Caco-2 (cell line): ENCODE measurements at regions of chr22 and their contacts with region 1.

Region 1: GRCh38 chr22:21938071-21938822 is 14.4 kb downstream of the PPM1F start:
- DNase-seq: peak; percentile 86 to 93
- H3K4me3 ChIP-seq: peak overlapping the region; percentile 90
- H3K4me3 Mint-ChIP-seq: peak overlapping the region; percentile 97
- H3K27ac Mint-ChIP-seq: peak overlapping the region; percentile 88
- H3K4me1 ChIP-seq: 0 out of 2 replicates have a peak, but pooled peaks cover 3% of the 10 kb centered on the region
- H3K4me1 Mint-ChIP-seq: peaks cover 9% of the 10 kb centered on the region
- H3K27me3 ChIP-seq: no peaks in the 10 kb centered on the region
- H3K27me3 Mint-ChIP-seq: no peaks in the 10 kb centered on the region
- CTCF ChIP-seq: peak; percentile 88 to 98

Region 2: DNA sequence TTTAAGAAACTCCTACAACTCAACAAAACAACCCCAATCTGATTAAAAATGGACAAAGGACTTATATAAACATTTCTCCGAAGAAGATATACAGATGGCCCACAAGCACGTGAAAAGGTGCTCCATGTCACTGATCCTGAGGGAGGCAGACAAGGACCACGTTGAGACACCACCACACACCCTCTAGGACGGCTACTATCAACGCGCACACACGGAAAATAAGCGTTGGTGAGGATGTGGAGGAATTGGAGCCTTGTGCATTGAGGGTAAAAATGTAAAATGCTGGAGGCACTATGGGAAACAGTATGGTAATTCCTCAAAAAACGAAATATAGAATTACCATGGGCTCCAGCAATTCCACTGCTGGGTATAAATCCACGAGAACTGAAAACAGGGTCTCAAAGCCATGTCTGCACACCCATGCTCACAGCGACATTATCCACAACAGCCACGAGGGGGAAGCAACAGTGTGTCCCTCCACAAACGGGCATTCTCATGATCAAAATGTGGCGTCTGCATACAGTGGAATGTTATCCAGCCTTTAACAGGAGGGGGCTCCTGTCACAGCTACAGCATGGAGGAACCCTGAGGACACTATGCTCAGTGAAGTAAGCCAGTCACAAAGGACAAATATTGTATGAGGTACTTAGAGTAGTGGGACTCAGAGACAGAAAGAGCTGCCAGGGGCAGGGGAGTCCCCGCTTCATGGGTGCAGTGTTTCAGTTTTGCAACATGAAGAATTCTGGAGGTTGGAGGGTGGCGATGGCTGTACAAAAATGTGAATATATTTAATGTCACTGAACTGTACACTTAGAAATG is 225.1 kb before region 1 on chr22:
- CTCF ChIA-PET with region 1: interaction called, 6 read pairs
- POLR2A ChIA-PET with region 1: no interaction called
- intact Hi-C with region 1: loop called (anchors 1 kb)
- DNase-seq: peak; percentile 76 to 78
- H3K4me3 ChIP-seq: 0 out of 2 replicates have a peak overlapping the region, but pooled peaks have one; percentile 4
- H3K4me3 Mint-ChIP-seq: peak overlapping the region; percentile 49
- H3K27ac Mint-ChIP-seq: no peak overlapping the region
- H3K4me1 ChIP-seq: peaks cover 12% of the 10 kb centered on the region
- H3K4me1 Mint-ChIP-seq: peaks cover 18% of the 10 kb centered on the region
- H3K27me3 ChIP-seq: no peaks in the 10 kb centered on the region
- H3K27me3 Mint-ChIP-seq: no peaks in the 10 kb centered on the region
- CTCF ChIP-seq: peak; percentile 66 to 72

Region 3: DNA sequence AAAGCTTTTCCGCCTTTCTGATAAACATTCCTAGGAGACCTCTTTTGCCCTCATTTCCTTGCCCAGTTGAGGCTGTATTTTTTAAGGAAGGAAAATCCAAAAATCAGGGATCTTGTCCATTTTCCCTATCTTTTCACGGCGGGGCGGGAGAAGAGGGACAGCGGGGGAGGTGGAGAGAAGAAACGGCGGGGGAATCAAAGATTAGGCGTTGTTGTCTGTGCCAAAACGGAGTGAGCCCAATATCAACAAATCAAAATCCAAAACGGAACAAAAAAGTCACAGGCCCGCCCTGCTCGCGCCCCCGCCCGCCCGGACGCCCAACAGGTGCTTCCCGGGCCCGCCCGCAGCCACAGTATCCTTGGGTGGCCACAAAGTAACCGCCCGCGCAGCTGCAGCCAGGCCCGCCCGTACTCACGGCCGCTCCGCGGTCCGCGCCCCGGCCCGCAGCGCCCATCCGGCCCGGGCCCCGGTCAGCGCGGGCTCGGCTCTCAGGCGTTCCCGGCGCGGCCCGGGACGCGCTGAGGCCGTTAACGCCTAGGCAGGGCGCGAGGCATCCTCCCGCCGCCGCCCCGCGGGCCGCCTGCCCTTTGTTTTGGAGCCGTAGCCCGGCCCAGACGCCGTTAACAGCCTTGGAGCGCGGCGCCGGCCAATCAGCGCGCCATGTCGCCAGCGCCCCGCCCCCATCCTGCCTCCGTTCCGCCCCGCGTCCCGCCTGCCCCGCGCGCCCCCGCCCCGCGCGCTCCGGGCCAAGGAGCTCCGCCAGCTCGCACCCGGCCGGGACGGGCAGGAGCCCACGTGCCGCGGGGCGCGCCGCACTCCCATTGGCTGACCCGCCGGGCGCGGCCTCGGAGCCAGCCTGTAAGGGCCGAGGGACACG is 202.8 kb before region 1 on chr22 and contains the start of gene YPEL1:
- CTCF ChIA-PET with region 1: interaction called, 4 read pairs
- POLR2A ChIA-PET with region 1: interaction called, 4 read pairs
- intact Hi-C with region 1: loop called (anchors 2 kb)
- DNase-seq: peak; percentile 95 to 99
- H3K4me3 ChIP-seq: peak within 1 kb of the TSS; percentile 62
- H3K4me3 Mint-ChIP-seq: peak within 1 kb of the TSS; percentile 82
- H3K27ac Mint-ChIP-seq: no peak within 1 kb of the TSS
- H3K4me1 ChIP-seq: peaks cover 3% of the 10 kb centered on the region; the same call in 1 of the 2 replicates
- H3K4me1 Mint-ChIP-seq: peaks cover 8% of the 10 kb centered on the region
- H3K27me3 ChIP-seq: no peaks in the 10 kb centered on the region
- H3K27me3 Mint-ChIP-seq: peaks cover 2% of the 10 kb centered on the region
- CTCF ChIP-seq: no peak
- total RNA-seq, gene YPEL1: 1.2 and 1.3 TPM in 2 replicates

Region 4: DNA sequence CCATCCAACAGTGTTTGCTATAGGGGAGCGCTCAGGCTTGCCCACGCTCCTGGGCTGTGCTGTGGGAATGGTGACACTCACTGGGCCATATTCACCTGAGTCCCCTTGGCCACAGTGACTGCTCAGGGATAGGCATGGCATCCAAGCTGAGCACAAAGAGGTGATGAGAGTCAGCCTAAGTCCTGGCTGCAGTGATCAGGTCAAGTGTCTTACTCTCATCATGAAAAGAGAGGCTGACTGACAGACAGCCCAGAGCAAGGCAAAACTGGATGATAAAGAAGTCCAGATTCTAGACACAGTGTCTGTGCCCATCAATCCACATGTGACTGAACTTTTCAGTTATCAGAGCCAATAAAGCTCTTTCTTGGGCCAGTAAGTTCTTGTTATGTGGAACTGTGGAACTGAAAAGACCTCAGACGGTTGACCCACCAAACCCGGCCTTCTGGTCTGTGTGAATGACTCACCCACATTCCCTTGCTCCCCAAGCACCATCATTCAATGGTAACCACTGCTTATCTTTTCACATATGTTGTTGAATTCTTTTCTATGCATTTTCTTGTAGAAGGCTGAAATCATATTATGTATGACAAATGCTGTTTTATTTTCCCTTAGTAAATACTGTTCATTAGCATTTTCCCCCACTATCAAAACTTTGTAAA is 159.4 kb before region 1 on chr22:
- CTCF ChIA-PET with region 1: interaction called, 6 read pairs
- POLR2A ChIA-PET with region 1: no interaction called
- intact Hi-C with region 1: loop called (anchors 1 kb)
- DNase-seq: no peak
- H3K4me3 ChIP-seq: no peak overlapping the region
- H3K4me3 Mint-ChIP-seq: no peak overlapping the region
- H3K27ac Mint-ChIP-seq: no peak overlapping the region
- H3K4me1 ChIP-seq: no peaks in the 10 kb centered on the region
- H3K4me1 Mint-ChIP-seq: no peaks in the 10 kb centered on the region
- H3K27me3 ChIP-seq: no peaks in the 10 kb centered on the region
- H3K27me3 Mint-ChIP-seq: no peaks in the 10 kb centered on the region
- CTCF ChIP-seq: no peak

Region 5: DNA sequence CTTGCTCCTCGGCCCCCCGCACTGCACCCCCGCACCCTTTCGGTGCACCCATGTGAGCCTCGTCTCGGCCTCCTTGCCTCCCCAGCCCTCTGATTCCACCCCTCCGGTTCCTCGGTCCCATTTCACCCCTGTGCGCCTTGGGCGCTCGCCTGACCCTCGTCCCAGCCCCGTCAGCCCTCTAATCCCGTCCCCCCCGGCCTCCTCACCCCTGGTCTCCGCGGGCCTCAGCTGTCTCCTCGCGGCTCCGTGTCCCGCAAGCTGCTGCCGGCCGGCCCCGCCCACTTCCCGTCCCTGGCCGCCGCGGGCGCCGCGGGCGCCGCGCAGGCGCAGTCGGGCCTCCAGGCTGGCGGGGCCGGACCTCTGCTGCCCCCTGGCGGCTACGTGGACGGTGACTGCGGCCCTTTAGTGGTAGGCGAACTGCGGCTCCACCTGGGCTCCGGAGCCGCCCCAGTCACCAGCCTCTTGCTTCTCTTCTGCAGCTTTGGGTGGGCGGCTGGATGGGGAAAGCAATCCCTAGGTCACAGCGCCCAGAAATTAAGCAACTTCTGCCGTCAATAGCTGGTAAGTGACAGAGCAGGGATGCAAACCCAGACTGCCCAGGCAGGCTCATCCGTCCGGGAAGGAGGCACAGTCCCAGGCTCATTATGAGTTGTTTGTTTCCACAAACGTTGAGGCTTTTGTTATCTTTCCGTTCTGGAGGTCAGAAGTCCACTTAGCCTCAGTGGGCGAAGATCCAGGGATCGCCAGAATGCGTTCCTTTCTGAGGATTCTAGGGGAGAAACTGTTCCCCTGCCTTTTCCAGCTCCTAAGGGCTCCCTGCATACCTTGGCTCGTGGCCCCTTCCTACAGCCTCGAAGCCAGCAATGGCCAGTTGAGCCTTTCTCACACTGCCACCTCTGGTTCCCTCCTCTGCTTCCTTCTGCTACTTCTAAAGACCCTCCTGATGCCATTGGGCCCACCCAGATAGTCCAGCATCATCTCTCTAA is 14.6 kb after region 1 on chr22 and contains the start of gene PPM1F:
- CTCF ChIA-PET with region 1: interaction called, 19 read pairs
- POLR2A ChIA-PET with region 1: no interaction called
- intact Hi-C with region 1: loop called (anchors 2 kb)
- DNase-seq: peak; percentile 72 to 92
- H3K4me3 ChIP-seq: peak within 1 kb of the TSS; percentile 97
- H3K4me3 Mint-ChIP-seq: peak within 1 kb of the TSS; percentile 79
- H3K27ac Mint-ChIP-seq: peak within 1 kb of the TSS; percentile 39
- H3K4me1 ChIP-seq: peaks cover 5% of the 10 kb centered on the region; the same call in 1 of the 2 replicates
- H3K4me1 Mint-ChIP-seq: peaks cover 2% of the 10 kb centered on the region
- H3K27me3 ChIP-seq: no peaks in the 10 kb centered on the region
- H3K27me3 Mint-ChIP-seq: no peaks in the 10 kb centered on the region
- CTCF ChIP-seq: peak; percentile 76 to 87
- total RNA-seq, gene PPM1F: 18.9 and 25.8 TPM in 2 replicates